PC-3 (cell line): ENCODE measurements at regions of chr9 and their contacts with region 1.

Region 1: DNA sequence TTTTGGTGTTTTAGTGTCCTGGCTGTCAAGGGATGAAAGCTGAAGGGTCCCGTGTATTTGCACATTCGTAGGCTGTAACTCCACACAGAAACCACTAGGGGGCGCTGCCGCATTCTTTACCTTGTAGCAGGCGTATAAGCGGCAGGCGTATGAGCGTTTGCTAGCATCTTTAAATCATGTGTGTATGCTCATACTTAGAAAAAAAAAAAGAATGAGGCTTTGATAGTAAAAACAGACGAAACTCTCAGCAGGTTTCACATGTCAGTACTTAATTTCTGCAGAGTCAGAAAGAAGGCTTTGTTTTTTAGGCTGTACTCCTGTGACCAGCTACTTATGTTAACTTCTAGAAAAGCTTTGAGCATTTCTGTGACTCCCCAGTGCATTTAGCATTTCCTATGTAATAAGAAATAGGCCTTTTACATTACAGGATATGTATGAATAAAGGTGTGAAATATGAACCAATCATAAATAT is 218.8 kb upstream of the ADAMTSL1 start:
- DNase-seq: peak; percentile 88
- ATAC-seq: peak; percentile 66
- H3K4me3 ChIP-seq: no peak overlapping the region
- H3K27ac ChIP-seq: peak overlapping the region; percentile 71
- H3K4me1 ChIP-seq: peaks cover 26% of the 10 kb centered on the region
- H3K27me3 ChIP-seq: no peaks in the 10 kb centered on the region
- CTCF ChIP-seq: peak; percentile 90

Region 2: DNA sequence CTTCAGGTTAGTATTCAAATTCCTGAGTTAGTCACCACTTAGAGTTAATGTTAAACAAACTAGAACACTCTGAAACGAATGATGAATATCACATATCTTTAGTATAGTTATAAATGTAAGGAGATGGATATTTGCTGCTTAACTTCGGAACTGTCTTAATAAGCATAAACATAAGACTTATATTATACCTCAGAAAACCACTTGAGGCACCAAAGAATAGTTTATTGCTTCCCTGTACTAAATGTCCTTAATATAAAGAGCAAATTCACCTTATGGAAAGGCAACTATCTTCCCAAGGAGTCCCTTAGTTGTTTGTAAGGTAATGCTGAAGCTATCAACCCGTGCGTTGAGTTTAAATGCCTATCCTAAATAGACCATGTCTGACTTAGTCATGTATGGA is 81.3 kb before region 1 on chr9:
- CTCF ChIA-PET with region 1: no interaction called
- POLR2A ChIA-PET with region 1: no interaction called
- intact Hi-C with region 1: no loop called
- DNase-seq: no peak
- ATAC-seq: no peak
- H3K4me3 ChIP-seq: no peak overlapping the region
- H3K27ac ChIP-seq: no peak overlapping the region
- H3K4me1 ChIP-seq: no peaks in the 10 kb centered on the region
- H3K27me3 ChIP-seq: no peaks in the 10 kb centered on the region
- CTCF ChIP-seq: no peak; the same call in 1 of the 2 replicates

Region 3: DNA sequence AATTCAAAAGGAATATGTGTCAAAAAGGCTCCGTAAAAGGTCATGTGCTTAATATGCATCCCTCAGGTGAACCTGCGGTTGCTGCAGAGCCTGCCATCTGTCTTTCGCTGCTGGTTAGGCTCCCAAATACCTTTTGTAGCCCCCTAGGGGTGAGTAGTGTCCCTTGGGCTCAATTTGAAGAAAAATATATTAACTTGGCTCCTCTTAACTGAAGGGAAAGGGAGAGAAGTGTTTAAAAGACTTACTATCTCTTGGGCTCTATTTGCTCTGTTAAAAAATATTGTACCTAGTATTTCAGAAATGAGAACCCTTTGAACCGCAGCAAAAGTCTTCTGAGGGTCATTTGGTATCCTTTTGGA is 42.3 kb after region 1 on chr9:
- CTCF ChIA-PET with region 1: no interaction called
- POLR2A ChIA-PET with region 1: no interaction called
- intact Hi-C with region 1: no loop called
- DNase-seq: peak; percentile 37
- ATAC-seq: no peak
- H3K4me3 ChIP-seq: no peak overlapping the region
- H3K27ac ChIP-seq: no peak overlapping the region
- H3K4me1 ChIP-seq: peaks cover 8% of the 10 kb centered on the region
- H3K27me3 ChIP-seq: no peaks in the 10 kb centered on the region
- CTCF ChIP-seq: peak; percentile 53

Region 4: GRCh38 chr9:18393340-18394130 is 138.3 kb after region 1 on chr9:
- CTCF ChIA-PET with region 1: interaction called, 10 read pairs
- POLR2A ChIA-PET with region 1: no interaction called
- intact Hi-C with region 1: loop called (anchors 2 kb)
- DNase-seq: peak; percentile 92
- ATAC-seq: peak; percentile 91
- H3K4me3 ChIP-seq: peak overlapping the region; percentile 12; the same call in 1 of the 2 replicates
- H3K27ac ChIP-seq: peak overlapping the region; percentile 98
- H3K4me1 ChIP-seq: peaks cover 28% of the 10 kb centered on the region
- H3K27me3 ChIP-seq: no peaks in the 10 kb centered on the region
- CTCF ChIP-seq: no peak

Region 5: GRCh38 chr9:18543406-18544192 is 288.4 kb after region 1 on chr9:
- CTCF ChIA-PET with region 1: no interaction called
- POLR2A ChIA-PET with region 1: no interaction called
- intact Hi-C with region 1: loop called (anchors 10 kb)
- DNase-seq: peak; percentile 81
- ATAC-seq: peak; percentile 73
- H3K4me3 ChIP-seq: no peak overlapping the region
- H3K27ac ChIP-seq: peak overlapping the region; percentile 95
- H3K4me1 ChIP-seq: peaks cover 34% of the 10 kb centered on the region
- H3K27me3 ChIP-seq: no peaks in the 10 kb centered on the region
- CTCF ChIP-seq: no peak

Region 6: DNA sequence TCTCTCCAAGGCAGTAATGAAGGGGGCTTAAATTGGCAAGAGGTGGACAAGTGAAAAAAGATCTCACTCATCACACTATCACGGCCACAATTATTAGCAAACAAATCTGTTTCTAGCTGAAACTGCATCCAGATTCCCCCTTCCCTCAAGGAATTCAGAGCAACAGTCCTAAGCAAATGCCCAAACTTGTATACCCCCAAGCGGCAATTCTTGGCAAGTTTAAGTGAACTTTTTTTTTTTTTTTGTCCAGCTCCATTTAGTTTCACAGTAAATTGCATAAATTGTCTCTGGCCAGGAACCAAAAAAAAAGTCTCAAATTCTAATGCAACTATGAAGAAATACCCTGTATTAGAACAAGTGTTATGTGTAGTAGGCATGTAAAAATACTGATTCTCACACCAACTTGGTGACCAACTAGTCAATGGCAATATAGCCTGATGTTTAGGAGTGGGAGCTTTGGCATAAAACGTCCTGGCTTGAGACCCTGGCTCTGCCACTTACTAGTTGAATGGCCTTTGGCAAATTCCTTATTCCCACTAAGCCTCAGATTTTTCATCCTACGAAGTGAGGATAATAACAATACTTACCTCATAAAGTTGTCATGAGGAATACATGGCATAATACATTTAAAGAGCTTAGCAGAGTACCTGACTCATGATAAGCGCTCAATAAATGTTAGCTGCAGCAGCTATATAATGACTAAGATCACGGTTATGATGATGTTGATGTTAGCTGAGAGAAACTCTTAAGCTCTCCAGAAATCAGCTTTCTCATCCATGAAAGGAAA is 412.0 kb after region 1 on chr9:
- CTCF ChIA-PET with region 1: no interaction called
- POLR2A ChIA-PET with region 1: no interaction called
- intact Hi-C with region 1: loop called (anchors 5 kb)
- DNase-seq: peak; percentile 55
- ATAC-seq: peak; percentile 68
- H3K4me3 ChIP-seq: no peak overlapping the region
- H3K27ac ChIP-seq: peak overlapping the region; percentile 17; the same call in 1 of the 2 replicates
- H3K4me1 ChIP-seq: peaks cover 28% of the 10 kb centered on the region
- H3K27me3 ChIP-seq: no peaks in the 10 kb centered on the region
- CTCF ChIP-seq: no peak

Region 7: DNA sequence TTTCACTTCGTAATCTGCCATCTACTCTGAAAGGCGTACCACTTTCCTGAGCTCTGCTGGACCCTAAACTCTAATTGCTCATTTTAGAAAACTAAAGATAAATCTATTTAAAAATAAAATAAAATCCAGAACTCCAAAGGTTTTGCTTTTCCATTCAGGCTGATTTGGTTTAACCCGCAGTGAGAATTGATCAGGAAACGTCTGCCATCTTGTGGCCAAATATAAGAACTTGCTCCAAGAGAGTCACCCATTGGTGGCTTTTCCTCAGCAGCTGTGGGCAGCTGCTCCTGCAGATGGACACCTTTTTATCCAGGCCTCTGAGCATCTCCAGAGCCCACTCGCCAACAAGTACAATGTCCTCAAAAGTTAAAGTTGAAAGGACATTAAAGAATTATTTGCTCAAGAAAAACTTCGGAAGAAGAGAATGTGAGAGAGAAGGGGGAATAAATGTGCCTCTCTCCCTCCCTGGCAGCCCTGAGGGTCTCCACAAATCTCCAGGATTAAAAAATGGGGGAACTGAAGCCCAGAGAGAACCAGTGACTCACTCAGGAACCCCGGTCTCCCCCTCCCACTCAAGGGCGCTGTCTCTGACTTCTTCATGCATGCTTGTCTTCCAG is 773.7 kb after region 1 on chr9:
- CTCF ChIA-PET with region 1: interaction called, 4 read pairs
- POLR2A ChIA-PET with region 1: no interaction called
- intact Hi-C with region 1: loop called (anchors 10 kb)
- DNase-seq: peak; percentile 69
- ATAC-seq: peak; percentile 71
- H3K4me3 ChIP-seq: no peak overlapping the region
- H3K27ac ChIP-seq: no peak overlapping the region
- H3K4me1 ChIP-seq: no peaks in the 10 kb centered on the region
- H3K27me3 ChIP-seq: no peaks in the 10 kb centered on the region
- CTCF ChIP-seq: peak; percentile 70